CD8-positive, alpha-beta T cell (primary cell): ENCODE measurements at regions of chr20 and their contacts with region 1.

Region 1: DNA sequence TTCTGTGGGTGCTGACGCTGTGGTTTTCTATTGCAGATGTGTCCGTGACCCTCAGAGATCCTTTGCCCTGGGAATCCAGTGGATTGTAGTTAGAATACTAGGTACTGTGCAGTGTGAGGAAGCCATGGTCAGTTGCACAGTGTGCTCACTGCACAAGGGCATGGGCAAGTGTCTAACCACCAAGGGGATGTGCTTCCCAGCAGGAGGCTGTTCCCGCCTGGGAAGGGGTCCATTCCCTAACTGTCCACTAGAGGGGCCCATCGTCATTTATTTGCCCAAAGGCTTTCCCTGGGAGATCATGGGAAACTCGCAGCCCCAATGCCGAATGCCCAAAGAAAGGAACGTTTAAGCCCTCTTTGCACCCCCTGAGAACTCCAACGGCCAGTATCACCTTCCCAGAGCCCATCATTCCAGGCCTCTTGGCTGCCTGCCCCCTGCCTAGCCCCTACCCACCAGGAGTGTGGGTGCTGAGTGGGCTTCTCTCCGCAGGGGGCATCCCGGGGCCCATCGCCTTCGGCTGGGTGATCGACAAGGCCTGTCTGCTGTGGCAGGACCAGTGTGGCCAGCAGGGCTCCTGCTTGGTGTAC is 26.2 kb downstream of the SLCO4A1 start:
- DNase-seq: peak in 7 of 9 experiments; percentile 11 to 67 (median 49)
- ATAC-seq: peak; percentile 53
- H3K4me3 ChIP-seq: no peak overlapping the region
- H3K4me3 Mint-ChIP-seq: no peak overlapping the region
- H3K27ac ChIP-seq: no peak overlapping the region
- H3K27ac Mint-ChIP-seq: no peak overlapping the region
- H3K4me1 ChIP-seq: no peaks in the 10 kb centered on the region
- H3K4me1 Mint-ChIP-seq: no peaks in the 10 kb centered on the region
- H3K27me3 ChIP-seq: no peaks in the 10 kb centered on the region
- H3K27me3 Mint-ChIP-seq: no peaks in the 10 kb centered on the region
- CTCF ChIP-seq: peak; percentile 52

Region 2: GRCh38 chr20:62702886-62703854 is 34.6 kb after region 1 on chr20:
- CTCF ChIA-PET with region 1: interaction called, 3 read pairs
- POLR2A ChIA-PET with region 1: no interaction called
- intact Hi-C with region 1: loop called in 1 of 2 experiments (anchors 1 kb)
- DNase-seq: peak in 3 of 9 experiments; percentile 27 to 51 (median 27)
- ATAC-seq: peak; percentile 62
- H3K4me3 ChIP-seq: no peak overlapping the region
- H3K4me3 Mint-ChIP-seq: no peak overlapping the region
- H3K27ac ChIP-seq: no peak overlapping the region
- H3K27ac Mint-ChIP-seq: peak overlapping the region; percentile 62
- H3K4me1 ChIP-seq: no peaks in the 10 kb centered on the region
- H3K4me1 Mint-ChIP-seq: peaks cover 5% of the 10 kb centered on the region
- H3K27me3 ChIP-seq: peaks cover 2 to 5% of the 10 kb centered on the region in 2 experiments
- H3K27me3 Mint-ChIP-seq: peaks cover 12% of the 10 kb centered on the region
- CTCF ChIP-seq: no peak